Caco-2 (cell line): ENCODE measurements at regions of chr6 and their contacts with region 1.

Region 1: GRCh38 chr6:10429638-10430427 is 15.0 kb upstream of the TFAP2A start:
- DNase-seq: peak in 1 of 2 experiments; percentile 57
- H3K4me3 ChIP-seq: no peak overlapping the region
- H3K4me3 Mint-ChIP-seq: no peak overlapping the region
- H3K27ac Mint-ChIP-seq: peak overlapping the region; percentile 61
- H3K4me1 ChIP-seq: 0 out of 2 replicates have a peak, but pooled peaks cover 3% of the 10 kb centered on the region
- H3K4me1 Mint-ChIP-seq: peaks cover 17% of the 10 kb centered on the region
- H3K27me3 ChIP-seq: no peaks in the 10 kb centered on the region
- H3K27me3 Mint-ChIP-seq: no peaks in the 10 kb centered on the region
- CTCF ChIP-seq: peak; percentile 61 to 68

Region 2: DNA sequence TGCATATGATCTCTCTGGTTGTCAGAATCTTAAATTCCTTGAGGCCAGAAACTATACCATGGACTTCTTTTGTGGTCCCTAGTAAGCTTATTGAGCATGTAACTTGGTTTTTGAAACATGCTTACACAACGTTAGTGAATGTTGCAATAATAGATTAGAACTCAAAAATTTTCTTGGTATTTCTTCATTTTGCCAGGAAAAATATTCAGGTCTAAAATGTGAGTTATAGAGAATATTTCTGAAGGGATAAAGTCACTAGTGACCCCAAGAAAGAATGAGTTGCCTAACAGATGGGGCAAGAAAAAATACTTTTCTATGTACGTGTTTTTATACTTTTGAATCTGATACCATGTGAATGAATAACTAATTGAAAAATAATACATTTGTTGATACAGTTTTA is 210.3 kb before region 1 on chr6:
- CTCF ChIA-PET with region 1: no interaction called
- POLR2A ChIA-PET with region 1: no interaction called
- intact Hi-C with region 1: no loop called
- DNase-seq: no peak
- H3K4me3 ChIP-seq: no peak overlapping the region
- H3K4me3 Mint-ChIP-seq: no peak overlapping the region
- H3K27ac Mint-ChIP-seq: no peak overlapping the region
- H3K4me1 ChIP-seq: no peaks in the 10 kb centered on the region
- H3K4me1 Mint-ChIP-seq: no peaks in the 10 kb centered on the region
- H3K27me3 ChIP-seq: no peaks in the 10 kb centered on the region
- H3K27me3 Mint-ChIP-seq: peaks cover 5% of the 10 kb centered on the region
- CTCF ChIP-seq: no peak

Region 3: DNA sequence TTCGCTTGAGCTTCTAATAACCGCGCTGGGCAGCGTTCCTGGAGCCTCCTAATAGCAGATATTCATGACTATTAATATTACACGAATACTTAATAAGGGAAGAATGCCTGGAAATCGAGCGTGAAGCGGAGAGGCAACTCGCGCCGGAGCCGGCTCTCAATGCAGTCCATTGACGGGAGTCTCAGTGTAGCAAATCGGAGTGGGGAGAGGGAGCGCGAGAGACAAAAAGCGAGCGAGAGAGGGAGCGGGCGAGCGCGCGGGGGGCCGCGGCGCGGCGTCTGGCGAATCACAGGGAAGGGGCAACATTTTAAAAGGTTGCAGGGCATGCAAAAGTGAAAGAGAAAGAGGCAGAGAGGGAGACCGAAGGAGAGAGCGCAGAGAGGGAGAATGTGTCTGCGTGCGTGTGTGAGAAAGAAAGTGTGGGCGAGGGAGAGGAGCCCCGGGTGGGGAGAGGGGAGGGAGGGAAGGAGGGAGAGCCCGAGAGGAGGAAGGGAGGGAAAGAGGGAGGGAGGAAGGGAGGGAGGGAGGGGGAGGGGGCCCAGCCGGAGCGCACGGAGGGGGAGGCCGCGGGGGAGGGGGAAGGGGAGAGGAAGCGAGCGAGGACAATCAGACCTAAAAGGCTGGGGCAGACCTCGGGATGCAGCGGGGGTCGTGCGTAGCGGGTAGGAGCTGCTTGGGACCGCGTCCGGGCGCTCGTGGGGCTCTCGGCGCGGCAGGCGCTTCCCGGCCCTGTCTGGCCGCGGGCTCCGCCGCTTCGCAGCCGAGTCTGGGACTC is 17.7 kb before region 1 on chr6:
- CTCF ChIA-PET with region 1: interaction called, 16 read pairs
- POLR2A ChIA-PET with region 1: no interaction called
- intact Hi-C with region 1: no loop called
- DNase-seq: peak in 1 of 2 experiments; percentile 47
- H3K4me3 ChIP-seq: peak overlapping the region; percentile 70
- H3K4me3 Mint-ChIP-seq: peak overlapping the region; percentile 85
- H3K27ac Mint-ChIP-seq: peak overlapping the region; percentile 60
- H3K4me1 ChIP-seq: no peaks in the 10 kb centered on the region
- H3K4me1 Mint-ChIP-seq: peaks cover 6% of the 10 kb centered on the region
- H3K27me3 ChIP-seq: no peaks in the 10 kb centered on the region
- H3K27me3 Mint-ChIP-seq: peaks cover 2% of the 10 kb centered on the region
- CTCF ChIP-seq: no peak